Endothelial cell of umbilical vein (primary cell): ENCODE measurements at regions of chrX and their contacts with region 1.

Region 1: DNA sequence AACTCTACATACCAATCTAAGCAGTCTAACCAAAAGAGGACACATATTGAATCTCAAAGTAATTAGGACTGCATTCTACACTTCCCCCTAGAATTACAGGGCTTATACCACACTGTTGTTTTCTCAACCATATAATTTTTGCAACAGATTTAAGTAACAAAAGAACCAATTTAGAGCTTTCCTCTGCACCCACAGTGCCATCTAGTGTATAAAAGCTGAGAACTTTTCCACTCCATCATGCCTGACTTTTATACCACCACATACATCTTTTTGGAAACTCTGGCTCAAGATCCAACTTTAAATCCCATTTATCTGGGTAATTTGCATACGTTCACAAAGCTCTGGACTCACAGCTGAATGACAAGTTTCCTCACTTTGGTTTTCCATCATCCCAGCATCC is 99.5 kb downstream of the EFHC2 start:
- DNase-seq: peak; percentile 34
- H3K4me3 ChIP-seq: no peak overlapping the region
- H3K27ac ChIP-seq: no peak overlapping the region
- H3K4me1 ChIP-seq: no peaks in the 10 kb centered on the region
- H3K27me3 ChIP-seq: no peaks in the 10 kb centered on the region
- CTCF ChIP-seq: peak in 1 of 2 donors; percentile 31
- POLR2A ChIP-seq: no peak

Region 2: GRCh38 chrX:43949669-43950068 is 294.3 kb before region 1 on chrX:
- CTCF ChIA-PET with region 1: interaction called, 19 read pairs
- POLR2A ChIA-PET with region 1: no interaction called
- dilution Hi-C with region 1: no loop called
- intact Hi-C with region 1: no loop called
- DNase-seq: peak; percentile 5
- H3K4me3 ChIP-seq: no peak overlapping the region
- H3K27ac ChIP-seq: no peak overlapping the region
- H3K4me1 ChIP-seq: no peaks in the 10 kb centered on the region
- H3K27me3 ChIP-seq: no peaks in the 10 kb centered on the region
- CTCF ChIP-seq: peak; percentile 13 to 51
- POLR2A ChIP-seq: no peak

Region 3: DNA sequence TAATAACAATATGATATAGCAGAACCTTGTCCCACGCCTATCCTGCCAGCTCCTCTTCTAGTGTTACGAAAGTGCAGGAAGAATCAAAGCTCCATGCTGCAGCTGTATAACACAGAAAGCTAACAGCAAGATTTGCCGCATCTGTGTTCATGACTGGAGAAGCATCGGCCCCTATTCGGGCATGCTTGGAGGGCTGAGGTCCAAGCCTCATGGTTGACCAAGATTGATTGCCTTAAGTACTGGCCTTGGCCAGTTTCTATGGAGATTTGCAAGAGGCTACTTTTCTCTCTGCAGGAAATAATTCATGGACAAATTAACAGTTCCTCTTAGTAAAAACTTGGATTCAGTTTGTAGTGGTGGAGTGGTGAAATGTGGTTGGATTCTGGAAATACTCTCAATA is 257.9 kb before region 1 on chrX:
- CTCF ChIA-PET with region 1: no interaction called
- POLR2A ChIA-PET with region 1: no interaction called
- dilution Hi-C with region 1: no loop called
- intact Hi-C with region 1: no loop called
- DNase-seq: no peak
- H3K4me3 ChIP-seq: no peak overlapping the region
- H3K27ac ChIP-seq: no peak overlapping the region
- H3K4me1 ChIP-seq: no peaks in the 10 kb centered on the region
- H3K27me3 ChIP-seq: no peaks in the 10 kb centered on the region
- CTCF ChIP-seq: no peak
- POLR2A ChIP-seq: no peak

Region 4: DNA sequence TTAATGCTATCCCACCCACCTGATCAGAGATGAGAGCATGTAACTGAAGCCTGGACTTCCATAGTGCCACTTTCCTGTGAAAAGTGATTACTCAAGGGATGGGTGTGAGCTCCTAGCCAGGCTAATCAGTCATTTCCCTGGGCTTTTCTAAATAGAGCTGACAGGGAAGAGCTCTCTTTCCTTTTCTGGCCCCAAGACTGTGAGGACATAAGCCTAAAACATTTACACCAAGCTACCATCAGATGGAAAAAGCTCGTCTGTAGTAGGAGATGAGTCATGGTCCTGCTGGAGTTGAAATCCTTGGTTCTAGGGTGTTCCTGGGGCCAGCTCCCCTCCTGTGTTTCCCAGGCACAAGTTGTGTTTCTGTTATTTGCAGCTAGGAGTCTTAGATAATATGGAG is 218.5 kb before region 1 on chrX:
- CTCF ChIA-PET with region 1: interaction called, 20 read pairs
- POLR2A ChIA-PET with region 1: no interaction called
- dilution Hi-C with region 1: no loop called
- intact Hi-C with region 1: loop called (anchors 5 kb)
- DNase-seq: peak; percentile 3
- H3K4me3 ChIP-seq: no peak overlapping the region
- H3K27ac ChIP-seq: no peak overlapping the region
- H3K4me1 ChIP-seq: no peaks in the 10 kb centered on the region
- H3K27me3 ChIP-seq: no peaks in the 10 kb centered on the region
- CTCF ChIP-seq: no peak
- POLR2A ChIP-seq: no peak

Region 5: DNA sequence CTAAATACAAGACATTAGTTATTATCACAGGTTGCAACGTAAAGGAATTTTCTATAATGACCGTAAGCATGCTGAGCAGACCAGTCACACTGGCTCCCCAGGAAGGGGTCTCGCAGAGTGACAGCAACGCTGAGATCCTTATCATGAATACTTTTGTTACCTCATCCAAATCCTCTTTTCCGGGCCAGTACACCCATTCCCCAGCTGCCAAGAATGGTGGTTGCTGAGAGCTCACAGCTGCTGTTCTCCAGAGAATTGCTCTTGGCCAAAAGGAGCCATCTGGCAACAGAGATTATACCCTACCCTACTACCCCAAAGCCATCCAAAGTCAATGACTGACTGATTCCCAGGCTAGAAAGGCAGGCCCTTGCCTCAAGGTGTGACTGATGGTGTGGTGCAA is 207.0 kb after region 1 on chrX:
- CTCF ChIA-PET with region 1: no interaction called
- POLR2A ChIA-PET with region 1: no interaction called
- dilution Hi-C with region 1: no loop called
- intact Hi-C with region 1: no loop called
- DNase-seq: no peak
- H3K4me3 ChIP-seq: no peak overlapping the region
- H3K27ac ChIP-seq: no peak overlapping the region
- H3K4me1 ChIP-seq: no peaks in the 10 kb centered on the region
- H3K27me3 ChIP-seq: no peaks in the 10 kb centered on the region
- CTCF ChIP-seq: no peak
- POLR2A ChIP-seq: no peak